ENCODE measurements at regions of chr1 and their contacts with region 1.

Region 1: DNA sequence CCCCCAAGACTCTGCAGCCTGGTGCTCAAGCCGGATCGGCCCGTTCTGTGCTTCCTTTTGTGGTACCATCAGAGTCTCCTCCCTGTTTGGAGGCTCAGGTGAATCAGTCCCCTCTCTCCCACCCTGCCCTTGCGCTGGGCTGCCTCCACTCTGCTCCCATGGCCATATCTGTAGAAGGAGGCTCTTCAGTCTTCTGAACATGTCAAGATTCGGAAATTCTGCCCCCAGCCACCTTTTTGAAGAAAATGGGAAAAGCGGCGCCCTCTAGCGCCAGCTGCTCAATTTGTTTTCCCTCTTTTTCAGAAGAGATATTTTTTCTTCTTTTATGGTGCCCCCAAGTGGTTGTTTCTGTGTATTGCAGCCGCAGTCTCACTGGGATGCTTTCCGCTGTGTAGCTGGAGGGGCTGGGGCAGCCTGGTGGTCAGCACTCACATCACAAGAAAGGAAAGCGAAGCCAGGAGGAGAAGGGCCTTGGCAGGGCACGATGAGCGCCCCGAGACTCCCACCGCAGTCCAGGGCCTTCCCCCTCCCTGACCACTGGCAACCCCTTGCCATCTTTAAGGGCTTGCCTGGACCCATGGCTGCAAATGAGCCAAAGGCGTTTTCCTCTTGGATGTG is 58.4 kb upstream of the CACNA1E start:
- DNase-seq: peak; percentile 1
- H3K4me3 ChIP-seq: no peak overlapping the region
- H3K27me3 ChIP-seq: no peaks in the 10 kb centered on the region
- CTCF ChIP-seq: peak; percentile 95

Region 2: DNA sequence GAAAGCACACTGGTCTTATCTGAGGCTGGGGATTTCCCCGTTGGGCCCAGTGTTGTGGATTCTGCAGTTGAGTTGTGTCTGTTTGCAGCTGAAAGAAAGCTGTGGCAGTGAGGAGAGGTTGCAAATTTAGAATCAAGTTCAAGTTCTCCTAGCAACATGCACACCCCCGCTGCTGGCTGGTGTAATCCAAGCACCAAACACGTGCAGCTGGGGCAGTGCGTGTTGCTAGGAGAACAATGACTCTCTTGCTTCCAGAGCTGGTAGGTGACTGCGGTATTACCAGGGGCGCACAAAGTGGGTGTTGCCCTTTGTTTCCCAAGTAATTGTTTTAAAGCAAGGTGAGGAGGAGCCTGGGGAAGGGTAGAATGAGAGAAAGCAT is 244.9 kb before region 1 on chr1:
- CTCF ChIA-PET with region 1: interaction called, 15 read pairs
- POLR2A ChIA-PET with region 1: no interaction called
- DNase-seq: peak; percentile 29
- H3K4me3 ChIP-seq: no peak overlapping the region
- H3K27me3 ChIP-seq: peaks cover 16% of the 10 kb centered on the region
- CTCF ChIP-seq: no peak

Region 3: DNA sequence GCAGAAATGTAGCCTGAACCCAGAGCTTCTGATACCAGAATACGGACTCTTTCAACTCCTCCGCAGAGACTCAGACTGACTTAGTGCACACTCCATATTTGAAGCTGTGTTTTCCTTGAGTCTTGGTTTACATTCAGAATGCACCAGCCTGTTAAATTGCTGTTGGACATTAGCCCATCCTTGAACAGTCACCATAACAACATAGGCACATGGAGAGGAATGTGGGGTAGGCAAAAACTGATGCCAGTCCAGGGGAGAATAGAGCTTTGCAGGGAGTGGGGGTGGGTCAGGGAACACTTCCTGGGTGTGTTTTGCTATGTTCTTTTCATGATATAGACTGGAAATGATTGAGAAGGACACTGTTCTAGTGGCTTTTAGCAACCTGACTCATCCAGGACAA is 17.9 kb before region 1 on chr1:
- CTCF ChIA-PET with region 1: interaction called, 16 read pairs
- POLR2A ChIA-PET with region 1: no interaction called
- DNase-seq: no peak
- H3K4me3 ChIP-seq: no peak overlapping the region
- H3K27me3 ChIP-seq: no peaks in the 10 kb centered on the region
- CTCF ChIP-seq: no peak